PC-9 (cell line): ENCODE measurements at regions of chr10 and their contacts with region 1.

Region 1: GRCh38 chr10:22682237-22683139 is 31.9 kb downstream of the PIP4K2A start:
- DNase-seq: peak; percentile 34 to 55
- H3K4me3 ChIP-seq: peak overlapping the region; percentile 21; the same call in 1 of the 2 replicates
- H3K27ac ChIP-seq: peak overlapping the region; percentile 78
- H3K4me1 ChIP-seq: peaks cover 49% of the 10 kb centered on the region
- H3K27me3 ChIP-seq: no peaks in the 10 kb centered on the region
- CTCF ChIP-seq: no peak

Region 2: DNA sequence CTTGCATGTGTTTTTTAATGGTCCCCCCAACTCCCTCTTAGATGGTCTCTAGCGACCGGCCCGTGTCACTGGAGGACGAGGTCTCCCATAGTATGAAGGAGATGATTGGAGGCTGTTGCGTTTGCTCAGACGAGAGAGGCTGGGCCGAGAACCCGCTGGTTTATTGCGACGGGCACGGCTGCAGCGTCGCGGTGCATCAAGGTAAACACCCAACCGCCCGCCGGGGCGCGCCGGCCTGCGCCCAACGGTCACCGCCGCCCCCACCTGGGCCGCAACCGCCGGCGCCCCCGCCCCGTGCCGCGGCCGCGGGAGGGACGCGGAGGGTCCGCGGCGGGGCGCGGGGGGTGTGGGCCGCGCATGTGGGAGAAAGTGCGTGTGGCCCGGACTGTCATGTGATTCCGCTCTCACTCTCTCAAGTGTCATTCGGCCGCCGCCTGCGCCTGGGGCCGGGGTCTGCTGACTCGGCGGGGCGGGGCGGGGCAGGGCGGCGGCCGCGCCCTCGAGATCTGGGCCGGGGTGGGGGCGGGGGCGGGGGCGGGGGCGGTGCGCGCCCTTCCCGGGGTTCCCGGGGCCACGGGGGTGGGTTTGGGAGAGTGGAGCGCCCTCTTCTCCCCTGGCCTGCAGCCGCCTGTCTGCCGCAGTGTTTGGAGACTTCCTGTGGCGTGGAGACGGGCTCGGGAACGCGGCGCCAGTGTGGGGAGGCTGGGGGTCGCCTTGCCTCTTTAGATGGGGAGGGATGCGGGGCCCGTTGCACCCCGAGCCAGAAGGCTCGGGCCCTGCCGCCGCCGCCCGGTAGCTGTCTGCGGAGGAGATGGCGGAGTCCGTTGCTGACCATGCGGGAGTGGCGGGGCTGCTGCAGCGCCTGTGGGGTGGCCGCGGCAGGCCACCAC is 1147.6 kb before region 1 on chr10:
- CTCF ChIA-PET with region 1: no interaction called
- POLR2A ChIA-PET with region 1: no interaction called
- intact Hi-C with region 1: no loop called
- DNase-seq: peak in 1 of 2 experiments; percentile 33
- H3K4me3 ChIP-seq: peak overlapping the region; percentile 71
- H3K27ac ChIP-seq: no peak overlapping the region
- H3K4me1 ChIP-seq: peaks cover 14% of the 10 kb centered on the region
- H3K27me3 ChIP-seq: no peaks in the 10 kb centered on the region
- CTCF ChIP-seq: no peak

Region 3: GRCh38 chr10:22316285-22317120 is 366.0 kb before region 1 on chr10 and contains the start of gene COMMD3:
- CTCF ChIA-PET with region 1: no interaction called
- POLR2A ChIA-PET with region 1: no interaction called
- intact Hi-C with region 1: loop called (anchors 5 kb)
- DNase-seq: peak; percentile 55 to 77
- H3K4me3 ChIP-seq: peak within 1 kb of the TSS; percentile 67
- H3K27ac ChIP-seq: peak within 1 kb of the TSS; percentile 58
- H3K4me1 ChIP-seq: peaks cover 29% of the 10 kb centered on the region
- H3K27me3 ChIP-seq: no peaks in the 10 kb centered on the region
- CTCF ChIP-seq: no peak
- total RNA-seq, gene COMMD3: 38.1 and 43.5 TPM in 2 replicates

Region 4: GRCh38 chr10:22599048-22599561 is 83.4 kb before region 1 on chr10:
- CTCF ChIA-PET with region 1: no interaction called
- POLR2A ChIA-PET with region 1: no interaction called
- intact Hi-C with region 1: loop called (anchors 2 kb)
- DNase-seq: peak; percentile 17 to 75
- H3K4me3 ChIP-seq: no peak overlapping the region
- H3K27ac ChIP-seq: peak overlapping the region; percentile 71
- H3K4me1 ChIP-seq: peaks cover 19% of the 10 kb centered on the region
- H3K27me3 ChIP-seq: no peaks in the 10 kb centered on the region
- CTCF ChIP-seq: no peak

Region 5: DNA sequence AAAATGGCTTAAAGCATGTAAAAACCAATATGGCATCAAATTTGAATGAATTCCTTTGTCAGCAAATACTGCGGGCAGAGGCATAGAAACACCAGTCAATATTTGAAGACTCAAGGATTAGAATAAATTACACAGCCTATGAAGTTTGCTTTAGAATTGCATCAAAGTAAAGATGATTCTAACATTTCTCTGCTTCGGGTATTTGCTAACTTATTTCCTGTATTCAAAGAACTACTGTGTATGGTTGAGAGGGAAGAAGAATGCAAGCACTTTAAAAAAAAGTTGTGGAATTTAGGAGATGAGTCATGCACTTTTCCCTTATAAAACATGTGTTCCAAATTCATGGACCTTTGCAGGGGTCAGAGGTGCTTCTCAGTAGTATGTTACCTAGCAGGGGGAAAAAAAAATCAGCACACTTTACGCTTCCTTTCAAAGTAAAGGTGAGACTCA is 58.2 kb before region 1 on chr10:
- CTCF ChIA-PET with region 1: no interaction called
- POLR2A ChIA-PET with region 1: no interaction called
- intact Hi-C with region 1: loop called (anchors 2 kb)
- DNase-seq: peak in 1 of 2 experiments; percentile 79
- H3K4me3 ChIP-seq: no peak overlapping the region
- H3K27ac ChIP-seq: peak overlapping the region; percentile 76
- H3K4me1 ChIP-seq: peaks cover 49% of the 10 kb centered on the region
- H3K27me3 ChIP-seq: no peaks in the 10 kb centered on the region
- CTCF ChIP-seq: no peak

Region 6: GRCh38 chr10:22648547-22648961 is 33.9 kb before region 1 on chr10:
- CTCF ChIA-PET with region 1: no interaction called
- POLR2A ChIA-PET with region 1: no interaction called
- intact Hi-C with region 1: no loop called
- DNase-seq: no peak
- H3K4me3 ChIP-seq: no peak overlapping the region
- H3K27ac ChIP-seq: no peak overlapping the region
- H3K4me1 ChIP-seq: no peaks in the 10 kb centered on the region
- H3K27me3 ChIP-seq: no peaks in the 10 kb centered on the region
- CTCF ChIP-seq: no peak

Region 7: DNA sequence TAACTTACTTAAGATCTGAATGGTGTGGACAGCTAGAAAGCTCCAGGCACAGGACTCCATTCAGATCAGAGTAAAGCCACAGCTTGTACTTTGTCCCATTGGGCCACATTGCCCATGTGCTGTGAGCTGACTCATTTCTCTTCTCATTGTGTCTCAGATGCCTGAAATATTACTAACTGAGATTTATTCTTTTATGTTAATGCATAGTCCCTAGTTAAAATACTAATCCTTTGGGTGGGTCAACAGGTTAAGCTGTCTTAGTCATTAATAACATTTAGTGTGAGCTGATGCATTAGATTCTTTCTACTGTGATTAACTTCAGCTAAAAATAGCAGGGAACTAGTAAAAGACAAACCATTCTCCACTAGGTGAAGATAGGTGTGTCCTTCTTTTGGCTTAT is 140.6 kb after region 1 on chr10:
- CTCF ChIA-PET with region 1: no interaction called
- POLR2A ChIA-PET with region 1: no interaction called
- intact Hi-C with region 1: loop called (anchors 10 kb)
- DNase-seq: peak; percentile 53 to 88
- H3K4me3 ChIP-seq: no peak overlapping the region
- H3K27ac ChIP-seq: peak overlapping the region; percentile 82
- H3K4me1 ChIP-seq: peaks cover 25% of the 10 kb centered on the region
- H3K27me3 ChIP-seq: no peaks in the 10 kb centered on the region
- CTCF ChIP-seq: no peak

Region 8: DNA sequence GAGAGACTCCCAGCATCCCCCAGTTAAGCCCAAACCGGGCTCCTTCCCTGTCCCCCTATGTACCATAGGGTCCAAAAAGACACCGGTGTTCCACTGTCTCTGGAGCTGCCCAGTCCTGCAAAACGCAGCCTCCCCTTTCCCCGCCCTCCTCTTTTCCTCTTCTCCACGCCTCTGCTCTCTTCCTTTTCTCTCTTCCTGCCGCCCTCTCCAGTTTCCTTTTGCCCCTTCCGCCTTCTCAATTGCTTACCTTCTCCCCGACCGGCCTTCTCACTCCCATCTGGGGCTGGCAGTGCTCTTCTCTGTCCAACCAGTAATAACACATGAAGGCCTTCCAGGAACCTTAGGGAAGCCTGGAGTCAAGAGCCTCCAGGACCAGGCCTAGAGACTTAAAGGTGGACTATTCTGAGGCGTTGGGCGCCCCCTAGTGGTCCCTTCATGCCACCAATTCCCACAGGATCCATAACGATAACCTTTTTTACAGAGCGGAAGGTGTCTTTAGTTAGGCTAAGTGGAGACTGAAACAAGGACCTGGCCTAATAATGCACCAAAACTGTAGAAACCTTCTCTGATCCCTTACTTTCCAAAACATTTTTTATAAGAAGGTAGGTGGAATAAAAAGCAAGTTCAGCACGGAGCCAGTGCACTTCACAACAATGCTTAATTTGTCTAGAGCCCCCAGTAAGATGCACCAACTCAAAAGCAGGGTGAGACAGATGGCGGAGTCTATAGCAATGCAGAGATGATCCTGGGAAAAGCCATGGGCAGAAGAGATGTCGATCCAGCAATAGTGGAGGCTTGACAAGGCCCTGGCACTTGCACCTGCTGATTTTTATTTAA is 385.7 kb after region 1 on chr10:
- CTCF ChIA-PET with region 1: no interaction called
- POLR2A ChIA-PET with region 1: no interaction called
- intact Hi-C with region 1: loop called (anchors 5 kb)
- DNase-seq: peak; percentile 43 to 59
- H3K4me3 ChIP-seq: no peak overlapping the region
- H3K27ac ChIP-seq: no peak overlapping the region
- H3K4me1 ChIP-seq: no peaks in the 10 kb centered on the region
- H3K27me3 ChIP-seq: no peaks in the 10 kb centered on the region
- CTCF ChIP-seq: peak; percentile 84